Esophagus muscularis mucosa (tissue), 4 donors: ENCODE measurements at regions of chr18 and their contacts with region 1.

Region 1: DNA sequence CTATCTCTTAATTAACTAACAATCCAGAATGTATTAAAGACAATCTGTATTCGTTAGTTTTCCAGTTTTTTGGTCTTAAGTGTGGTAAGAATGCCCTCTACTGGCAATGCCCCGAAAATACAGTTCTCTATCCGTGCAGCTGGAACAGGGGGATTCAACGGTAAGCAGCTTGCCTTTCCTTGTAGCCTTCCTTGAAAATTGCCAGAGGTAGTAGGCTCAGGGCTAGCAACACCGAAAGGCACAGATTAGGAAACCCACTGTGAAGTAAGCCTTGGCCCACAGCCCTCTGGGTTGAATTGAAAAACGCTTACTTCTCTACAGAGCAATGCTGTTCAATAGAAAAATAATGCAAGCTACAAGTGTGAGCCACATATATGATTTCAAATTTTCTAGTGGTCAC is 17.1 kb upstream of the VPS4B start:
- DNase-seq: no peak
- H3K4me3 ChIP-seq: no peak overlapping the region
- H3K27ac ChIP-seq: no peak overlapping the region
- H3K4me1 ChIP-seq: peaks cover 0 to 5% (median 2%) of the 10 kb centered on the region in 4 donors
- H3K27me3 ChIP-seq: no peaks in the 10 kb centered on the region
- CTCF ChIP-seq: peak; percentile 71 to 81 (median 73)
- EP300 ChIP-seq: no peak
- POLR2A ChIP-seq: no peak

Region 2: DNA sequence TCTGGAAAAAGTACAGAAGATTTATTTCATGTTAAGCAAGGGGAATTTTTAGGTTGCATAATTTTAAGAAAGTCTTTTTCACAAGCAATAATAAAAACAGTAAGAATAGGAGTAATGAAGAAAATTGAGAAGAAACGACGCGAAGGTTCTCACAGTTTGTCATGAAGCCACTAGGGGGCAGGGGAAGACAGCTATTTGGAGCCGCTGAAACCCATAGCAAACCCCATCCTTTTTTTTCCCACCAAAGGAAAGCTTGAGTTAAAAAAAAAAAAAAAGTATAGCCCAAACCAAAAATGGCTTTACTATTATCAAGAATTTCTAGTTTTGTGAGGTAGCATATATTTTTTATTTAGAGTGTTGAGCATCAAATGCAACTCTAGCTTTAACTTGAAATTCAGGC is 423.1 kb before region 1 on chr18:
- intact Hi-C with region 1: loop called (anchors 2 kb)
- DNase-seq: no peak
- H3K4me3 ChIP-seq: no peak overlapping the region
- H3K27ac ChIP-seq: no peak overlapping the region
- H3K4me1 ChIP-seq: no peaks in the 10 kb centered on the region
- H3K27me3 ChIP-seq: no peaks in the 10 kb centered on the region
- CTCF ChIP-seq: peak; percentile 68 to 79 (median 75)
- EP300 ChIP-seq: no peak
- POLR2A ChIP-seq: no peak

Region 3: DNA sequence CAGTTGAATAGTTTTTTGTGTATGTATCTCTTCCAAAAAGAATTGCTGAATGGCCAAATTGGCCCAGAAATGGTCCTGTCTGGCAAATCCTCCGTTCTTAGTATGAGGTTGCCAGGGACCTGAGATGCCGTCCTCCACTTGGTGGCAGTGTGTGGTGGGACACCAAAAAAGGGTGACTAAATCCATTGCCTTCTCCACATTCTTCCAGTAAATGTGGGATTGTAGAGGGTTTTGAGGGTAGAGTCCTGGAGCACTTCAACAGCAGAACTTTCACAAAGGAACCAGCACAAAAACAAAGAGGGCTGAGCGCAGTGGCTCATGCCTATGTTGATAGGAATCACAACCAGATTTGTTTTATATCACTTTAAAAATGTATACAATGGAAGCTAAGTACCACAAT is 319.7 kb before region 1 on chr18:
- intact Hi-C with region 1: loop called (anchors 10 kb)
- DNase-seq: no peak
- H3K4me3 ChIP-seq: no peak overlapping the region
- H3K27ac ChIP-seq: no peak overlapping the region
- H3K4me1 ChIP-seq: peaks cover 0 to 11% (median 3%) of the 10 kb centered on the region in 4 donors
- H3K27me3 ChIP-seq: peaks cover 0 to 2% (median 0%) of the 10 kb centered on the region in 4 donors
- CTCF ChIP-seq: peak; percentile 31 to 46 (median 41)
- EP300 ChIP-seq: no peak
- POLR2A ChIP-seq: no peak

Region 4: DNA sequence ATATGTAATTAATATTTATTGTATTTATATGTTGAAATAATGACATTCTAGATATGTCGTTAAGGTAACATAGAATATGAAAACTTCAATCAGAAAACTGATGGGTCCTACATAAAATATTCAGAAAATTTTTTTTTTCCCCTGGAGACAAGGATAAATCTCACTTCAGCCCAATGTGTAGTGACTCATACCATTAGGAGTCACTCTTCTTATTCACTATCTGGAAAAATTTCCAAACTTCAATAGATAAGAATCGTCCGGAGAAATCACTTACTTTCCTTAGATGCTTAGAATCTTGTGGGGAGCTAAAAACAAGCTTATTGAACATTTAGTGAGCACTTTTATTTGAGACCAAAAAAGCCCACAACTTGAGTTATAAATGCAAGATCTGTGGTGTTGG is 152.4 kb after region 1 on chr18:
- intact Hi-C with region 1: no loop called
- DNase-seq: no peak
- H3K4me3 ChIP-seq: no peak overlapping the region
- H3K27ac ChIP-seq: no peak overlapping the region
- H3K4me1 ChIP-seq: no peaks in the 10 kb centered on the region
- H3K27me3 ChIP-seq: no peaks in the 10 kb centered on the region
- CTCF ChIP-seq: no peak
- EP300 ChIP-seq: no peak
- POLR2A ChIP-seq: no peak

Region 5: DNA sequence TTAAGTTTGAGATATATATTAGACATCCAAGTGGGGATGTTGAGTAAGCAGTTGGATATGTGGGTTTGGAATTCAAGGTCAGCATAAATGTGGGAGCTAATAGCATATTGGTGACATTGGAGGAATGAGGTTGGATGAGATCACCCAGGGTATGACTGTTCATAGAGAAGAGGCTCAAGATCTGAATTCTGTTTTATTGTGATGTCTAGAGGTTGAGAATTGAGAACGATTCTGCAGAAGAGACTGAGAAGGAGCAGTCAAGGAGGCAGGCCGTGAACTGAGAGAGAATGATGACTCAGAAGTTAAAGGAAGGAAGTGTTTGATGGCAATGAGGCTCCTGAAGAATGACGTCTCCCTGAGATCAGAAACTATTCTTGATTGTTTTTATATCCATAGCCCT is 269.3 kb after region 1 on chr18:
- intact Hi-C with region 1: no loop called
- DNase-seq: no peak
- H3K4me3 ChIP-seq: no peak overlapping the region
- H3K27ac ChIP-seq: no peak overlapping the region
- H3K4me1 ChIP-seq: no peaks in the 10 kb centered on the region
- H3K27me3 ChIP-seq: no peaks in the 10 kb centered on the region
- CTCF ChIP-seq: no peak
- EP300 ChIP-seq: no peak
- POLR2A ChIP-seq: no peak